CD14-positive monocyte (primary cell): ENCODE measurements at regions of chr19 and their contacts with region 1.

Region 1: DNA sequence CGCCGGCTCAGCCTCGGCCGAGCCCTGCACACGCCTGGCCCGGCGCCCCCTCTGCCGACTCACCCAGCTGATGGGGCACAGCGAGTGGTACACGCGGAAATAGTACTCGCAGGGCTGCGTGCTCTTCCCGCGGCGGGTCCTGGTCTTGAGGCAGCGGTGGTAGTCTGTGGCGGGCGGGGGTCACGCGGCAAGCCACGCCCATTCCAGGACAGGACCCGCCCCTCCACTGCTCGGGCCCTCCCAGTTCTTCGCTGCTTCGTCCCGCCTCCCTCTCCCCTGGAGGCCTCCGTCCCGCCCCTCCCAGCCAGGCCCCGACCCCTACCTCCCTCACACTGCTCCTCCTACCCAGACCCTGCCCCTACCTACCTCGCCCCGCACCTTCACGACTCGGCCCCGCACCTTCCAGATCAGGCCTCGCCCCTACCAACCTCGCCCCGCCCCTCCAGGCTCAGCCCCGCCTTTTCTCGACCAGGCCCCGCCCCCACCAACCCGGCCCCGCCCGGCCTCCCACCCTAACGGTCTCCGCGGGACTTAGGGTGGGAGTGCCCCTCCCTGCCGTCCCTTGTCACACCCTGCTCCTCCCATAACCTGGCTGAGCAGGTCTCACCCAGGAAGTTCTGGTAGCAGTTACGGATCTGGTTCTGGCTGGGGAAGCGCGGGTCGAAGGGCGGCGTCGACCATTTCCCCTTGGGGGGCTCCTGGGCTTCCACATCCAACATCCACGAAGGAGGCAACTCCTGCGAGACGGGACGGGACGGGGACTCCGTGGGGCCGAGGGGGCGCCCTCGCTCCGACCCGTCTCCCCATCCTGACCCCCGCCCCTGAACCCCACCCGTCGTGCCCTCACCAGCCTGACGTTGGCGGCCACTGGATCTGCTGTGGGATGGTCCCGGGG is 469 bp downstream of the COX6B2 start:
- DNase-seq: peak; percentile 38 to 63 (median 55)
- H3K4me3 ChIP-seq: peak overlapping the region; percentile 36 to 71 (median 45)
- H3K4me3 Mint-ChIP-seq: peak overlapping the region; percentile 84 to 90
- H3K27ac ChIP-seq: no peak overlapping the region
- H3K27ac Mint-ChIP-seq: peak overlapping the region in 4 of 7 donors; percentile 41 to 80 (median 64)
- H3K4me1 ChIP-seq: peaks cover 22 to 28% of the 10 kb centered on the region in 2 donors
- H3K4me1 Mint-ChIP-seq: peaks cover 33% of the 10 kb centered on the region
- H3K27me3 ChIP-seq: peaks cover 13 to 62% of the 10 kb centered on the region in 2 donors
- H3K27me3 Mint-ChIP-seq: peaks cover 55 to 75% (median 59%) of the 10 kb centered on the region in 3 donors
- CTCF ChIP-seq: no peak

Region 2: GRCh38 chr19:55160128-55160985 is 193.7 kb before region 1 on chr19:
- intact Hi-C with region 1: no loop called
- DNase-seq: peak; percentile 74 to 81 (median 76)
- H3K4me3 ChIP-seq: no peak overlapping the region
- H3K4me3 Mint-ChIP-seq: peak overlapping the region in 1 of 2 donors; percentile 73
- H3K27ac ChIP-seq: no peak overlapping the region
- H3K27ac Mint-ChIP-seq: peak overlapping the region in 2 of 7 donors; percentile 35 to 49
- H3K4me1 ChIP-seq: peaks cover 5 to 17% of the 10 kb centered on the region in 2 donors
- H3K4me1 Mint-ChIP-seq: peaks cover 7% of the 10 kb centered on the region
- H3K27me3 ChIP-seq: peaks cover 16 to 79% of the 10 kb centered on the region in 2 donors
- H3K27me3 Mint-ChIP-seq: peaks cover 65 to 93% (median 88%) of the 10 kb centered on the region in 3 donors
- CTCF ChIP-seq: peak; percentile 88

Region 3: DNA sequence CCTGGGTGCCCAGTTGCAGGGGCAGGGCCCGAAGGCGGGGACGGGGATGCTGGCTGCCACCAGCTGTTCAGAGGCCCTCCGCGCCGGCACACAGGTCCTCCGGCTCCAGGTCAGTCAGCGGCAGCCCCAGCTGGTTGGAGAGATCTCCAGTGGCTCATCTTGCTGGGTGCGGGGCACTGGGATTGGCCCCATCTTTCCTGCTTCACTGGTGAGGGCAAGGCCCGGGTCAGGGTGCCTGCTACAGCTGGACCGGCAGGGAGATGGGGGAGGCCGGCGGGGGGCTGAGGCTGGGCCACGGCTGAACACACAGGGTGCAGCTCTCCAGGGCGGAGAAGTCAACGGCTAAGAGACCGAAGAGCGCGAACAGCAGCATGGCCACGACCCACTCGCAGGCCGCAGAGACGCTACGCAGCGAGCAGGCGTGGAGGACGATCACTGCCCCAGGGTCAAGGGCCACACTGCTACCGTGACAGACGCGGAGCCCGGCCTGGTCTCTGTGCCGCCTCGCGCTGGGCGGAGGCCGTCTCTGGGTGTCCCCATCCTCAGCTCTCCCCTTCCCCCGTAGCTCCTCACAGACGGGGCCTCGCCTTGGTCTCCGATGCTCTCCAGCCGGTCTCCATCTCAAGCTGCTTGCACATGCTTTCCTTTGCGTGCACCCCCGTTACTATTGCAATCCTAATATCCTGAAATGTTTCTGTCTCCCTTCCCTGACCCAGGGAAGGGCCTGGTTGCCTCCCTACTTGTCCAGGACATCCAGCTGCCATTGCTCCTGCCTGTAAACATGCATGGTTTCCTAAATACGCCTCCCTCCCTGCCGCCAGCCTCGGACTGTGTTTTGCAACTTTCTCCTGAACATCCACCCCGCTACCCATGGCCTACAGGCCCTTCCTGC is 41.2 kb before region 1 on chr19:
- intact Hi-C with region 1: loop called in 1 of 2 experiments (anchors 5 kb)
- DNase-seq: no peak
- H3K4me3 ChIP-seq: no peak overlapping the region
- H3K4me3 Mint-ChIP-seq: no peak overlapping the region
- H3K27ac ChIP-seq: no peak overlapping the region
- H3K27ac Mint-ChIP-seq: peak overlapping the region in 3 of 7 donors; percentile 26 to 75 (median 50)
- H3K4me1 ChIP-seq: no peaks in the 10 kb centered on the region
- H3K4me1 Mint-ChIP-seq: peaks cover 8% of the 10 kb centered on the region
- H3K27me3 ChIP-seq: no peaks in the 10 kb centered on the region
- H3K27me3 Mint-ChIP-seq: peaks cover 0 to 3% (median under 1%) of the 10 kb centered on the region in 3 donors
- CTCF ChIP-seq: no peak